ENCODE measurements at regions of chr17 and their contacts with region 1.

Region 1: GRCh38 chr17:28750178-28751047 is 6.6 kb downstream of the TRAF4 start:
- DNase-seq: peak; percentile 91 to 98 (median 97)
- H3K4me3 ChIP-seq: no peak overlapping the region
- H3K27ac ChIP-seq: peak overlapping the region in 3 of 5 donors; percentile 51 to 98 (median 58)
- H3K4me1 ChIP-seq: peaks cover 24 to 36% of the 10 kb centered on the region in 2 donors
- H3K27me3 ChIP-seq: no peaks in the 10 kb centered on the region
- CTCF ChIP-seq: peak; percentile 99 to 100 (median 100)
- POLR2A ChIP-seq: peak in 1 of 2 donors; percentile 22

Region 2: DNA sequence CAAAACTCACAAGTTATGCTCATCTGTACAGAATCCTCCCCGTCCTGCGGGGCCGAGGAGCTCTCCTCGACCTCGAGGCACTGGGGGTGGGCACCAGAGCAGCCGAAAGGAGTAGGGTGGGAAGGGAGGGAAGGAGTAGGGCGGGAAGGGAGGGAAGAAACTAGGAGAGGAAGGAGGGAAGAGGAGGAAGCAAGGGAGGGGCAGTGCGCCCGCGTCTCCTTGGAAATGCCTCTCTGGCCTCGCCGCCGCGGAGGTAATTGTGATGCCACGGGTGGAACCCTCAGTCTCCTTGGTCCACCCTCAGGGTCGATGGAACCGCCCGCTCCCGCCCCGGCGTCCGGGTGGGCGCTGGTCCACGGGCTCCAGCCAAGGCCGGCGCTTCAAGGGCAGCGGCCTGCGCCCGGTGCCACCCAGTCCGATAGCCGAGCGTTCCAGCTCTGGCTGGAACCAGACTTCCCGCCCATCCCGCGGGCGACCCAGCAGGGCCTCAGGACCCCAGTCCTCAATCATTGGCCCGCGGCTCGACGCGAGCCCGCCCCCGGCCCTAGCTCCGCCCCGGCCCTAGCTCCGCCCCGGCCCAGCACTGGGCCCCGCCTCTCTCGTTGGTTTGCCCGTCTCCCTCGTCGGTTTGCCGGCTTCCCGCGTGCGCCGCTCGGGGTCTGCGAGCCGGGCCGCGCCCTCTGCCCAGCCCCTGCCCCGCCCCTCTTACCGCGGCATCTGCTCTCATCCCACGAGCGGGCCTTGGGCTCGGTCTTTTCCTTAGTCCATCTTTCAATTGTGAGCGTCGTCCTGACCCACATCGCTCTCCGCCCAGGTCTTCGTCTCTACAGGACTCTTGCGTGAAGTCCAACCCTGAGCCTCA is 39.3 kb before region 1 on chr17:
- intact Hi-C with region 1: no loop called
- DNase-seq: peak; percentile 85 to 93 (median 90)
- H3K4me3 ChIP-seq: peak overlapping the region in 2 of 4 donors; percentile 18 to 61
- H3K27ac ChIP-seq: peak overlapping the region; percentile 73 to 94 (median 78)
- H3K4me1 ChIP-seq: peaks cover 8 to 14% of the 10 kb centered on the region in 2 donors
- H3K27me3 ChIP-seq: no peaks in the 10 kb centered on the region
- CTCF ChIP-seq: peak in 1 of 6 experiments; percentile 2
- POLR2A ChIP-seq: peak; percentile 57 to 64

Region 3: DNA sequence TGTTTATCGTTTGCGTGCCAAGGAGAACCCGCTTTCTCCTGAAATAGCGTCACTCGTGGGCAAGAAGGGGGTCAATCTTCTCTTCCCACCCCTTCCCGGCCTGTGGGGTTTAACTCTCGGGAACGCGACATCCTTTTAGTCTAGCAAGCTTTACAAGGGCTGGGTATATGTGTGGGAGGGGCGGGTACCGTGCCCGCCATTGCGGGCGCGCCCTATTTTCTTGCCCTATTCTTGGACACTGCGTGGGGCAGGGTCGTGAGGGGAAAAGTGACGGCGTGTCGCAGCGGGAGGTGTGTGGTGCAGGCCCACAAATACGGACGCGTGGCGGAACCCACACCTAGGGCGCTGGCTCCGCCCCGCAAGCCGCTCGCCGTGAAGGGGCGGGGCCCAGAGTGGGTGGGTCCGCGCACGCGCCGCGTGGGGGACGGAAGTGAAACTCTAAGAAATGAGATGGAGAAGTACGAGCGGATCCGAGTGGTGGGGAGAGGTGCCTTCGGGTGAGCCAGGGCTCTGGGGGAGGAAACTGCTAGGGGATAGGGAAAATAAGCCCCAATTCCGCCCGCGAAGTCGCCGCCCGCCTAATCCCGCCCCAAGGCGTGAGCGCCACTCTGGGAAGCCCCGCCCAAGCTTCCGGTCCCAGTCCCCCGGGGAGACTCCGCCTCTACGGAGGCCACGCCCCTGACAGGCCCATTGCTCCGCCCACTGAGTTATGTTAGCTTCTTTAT is 21.9 kb before region 1 on chr17 and contains the start of gene NEK8:
- intact Hi-C with region 1: loop called in 1 of 2 experiments (anchors 2 kb)
- DNase-seq: peak; percentile 93 to 98 (median 95)
- H3K4me3 ChIP-seq: peak within 1 kb of the TSS; percentile 28 to 73 (median 64)
- H3K27ac ChIP-seq: peak within 1 kb of the TSS; percentile 67 to 97 (median 83)
- H3K4me1 ChIP-seq: peaks cover 15 to 28% of the 10 kb centered on the region in 2 donors
- H3K27me3 ChIP-seq: no peaks in the 10 kb centered on the region
- CTCF ChIP-seq: no peak
- POLR2A ChIP-seq: peak; percentile 14 to 21
- total RNA-seq, gene NEK8: 0.54 to 11.9 (median 6.1) TPM

Region 4: GRCh38 chr17:28842282-28843012 is 92.0 kb after region 1 on chr17 and contains the start of gene FAM222B:
- intact Hi-C with region 1: loop called in 1 of 2 experiments (anchors 10 kb)
- DNase-seq: peak; percentile 75 to 83 (median 80)
- H3K4me3 ChIP-seq: peak within 1 kb of the TSS; percentile 21 to 89 (median 56)
- H3K27ac ChIP-seq: peak within 1 kb of the TSS in 3 of 5 donors; percentile 21 to 86 (median 69)
- H3K4me1 ChIP-seq: peaks cover 5 to 10% of the 10 kb centered on the region in 2 donors
- H3K27me3 ChIP-seq: no peaks in the 10 kb centered on the region
- CTCF ChIP-seq: peak in 1 of 6 experiments; percentile 7
- POLR2A ChIP-seq: peak; percentile 52 to 77
- total RNA-seq, gene FAM222B: 5.0 to 18.3 (median 14.8) TPM

Region 5: GRCh38 chr17:28856028-28856574 is 105.7 kb after region 1 on chr17:
- intact Hi-C with region 1: no loop called
- DNase-seq: no peak
- H3K4me3 ChIP-seq: no peak overlapping the region
- H3K27ac ChIP-seq: no peak overlapping the region
- H3K4me1 ChIP-seq: peaks cover 6 to 9% of the 10 kb centered on the region in 2 donors
- H3K27me3 ChIP-seq: no peaks in the 10 kb centered on the region
- CTCF ChIP-seq: no peak
- POLR2A ChIP-seq: no peak

Region 6: DNA sequence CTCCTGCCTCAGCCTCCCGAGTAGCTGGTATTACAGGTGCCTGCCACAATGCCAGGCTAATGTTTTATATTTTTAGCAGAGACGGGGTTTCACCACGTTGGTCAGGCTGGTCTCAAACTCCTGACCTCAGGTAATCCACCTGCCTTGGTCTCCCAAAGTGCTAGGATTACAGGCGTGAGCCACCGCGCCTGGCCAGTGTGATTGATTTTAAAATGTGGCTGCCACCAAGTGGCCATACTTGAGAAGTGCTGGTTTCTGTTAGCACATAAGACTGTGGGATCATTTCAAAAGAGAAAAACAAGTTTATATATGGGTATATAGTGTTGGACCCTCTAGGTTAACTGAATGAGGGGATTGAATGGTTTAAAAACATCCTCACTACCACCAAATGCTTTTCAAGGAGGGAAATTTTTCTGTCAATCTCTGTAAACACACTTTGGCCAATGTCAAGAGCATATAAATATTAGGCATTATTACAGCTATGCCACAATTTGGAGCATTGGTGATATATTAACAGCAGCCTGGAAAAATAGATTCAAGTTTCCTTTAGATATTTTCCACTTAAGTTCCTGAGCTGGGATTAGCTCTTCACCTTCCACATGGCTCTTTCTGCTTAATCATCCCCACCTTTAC is 166.0 kb after region 1 on chr17:
- intact Hi-C with region 1: loop called in 1 of 2 experiments (anchors 10 kb)
- DNase-seq: peak in 6 of 7 donors; percentile 44 to 80 (median 60)
- H3K4me3 ChIP-seq: no peak overlapping the region
- H3K27ac ChIP-seq: no peak overlapping the region
- H3K4me1 ChIP-seq: peaks cover 0 to 16% of the 10 kb centered on the region in 2 donors
- H3K27me3 ChIP-seq: no peaks in the 10 kb centered on the region
- CTCF ChIP-seq: peak; percentile 46 to 75 (median 67)
- POLR2A ChIP-seq: no peak

Region 7: DNA sequence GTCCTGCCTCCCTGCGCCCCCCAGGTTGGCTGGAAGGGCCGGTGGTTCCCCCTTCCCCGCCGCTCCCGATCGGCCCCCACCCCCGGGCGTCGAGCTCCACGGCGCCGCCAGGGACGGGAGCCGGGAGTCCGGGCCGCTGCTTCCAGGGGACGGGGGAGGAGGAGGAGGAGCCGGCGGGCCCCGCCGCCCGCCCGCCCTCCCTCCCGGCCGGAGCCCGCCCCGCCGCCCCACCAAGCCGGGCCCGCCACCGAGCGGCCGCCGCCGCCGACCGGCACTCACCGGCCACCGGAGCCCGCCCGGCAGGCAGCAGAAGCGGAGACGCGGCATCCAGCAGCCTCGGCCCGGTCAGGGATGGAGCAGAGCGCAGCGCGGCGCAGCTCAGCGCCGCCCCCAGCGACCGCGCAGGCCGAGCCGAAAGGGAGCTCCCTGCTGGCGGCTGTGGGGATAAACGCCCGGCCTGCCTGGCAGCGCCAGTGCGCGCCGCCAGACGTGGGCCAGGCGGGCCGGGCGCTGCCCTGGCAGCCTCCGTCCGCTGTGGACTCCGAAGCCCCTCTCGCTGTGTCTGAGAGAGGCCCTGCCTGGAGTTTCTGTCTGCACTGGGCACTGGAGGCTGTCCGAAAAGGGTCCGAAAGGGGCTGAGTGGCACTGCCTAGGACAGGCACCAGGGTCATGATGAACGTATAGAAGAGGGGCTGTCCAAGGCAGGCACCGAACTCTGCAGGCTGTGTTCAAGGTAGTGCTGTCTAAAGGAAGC is 429.8 kb after region 1 on chr17 and contains the start of gene MYO18A:
- intact Hi-C with region 1: no loop called
- DNase-seq: peak; percentile 71 to 83 (median 82)
- H3K4me3 ChIP-seq: peak within 1 kb of the TSS in 2 of 4 donors; percentile 47 to 72
- H3K27ac ChIP-seq: peak within 1 kb of the TSS in 3 of 5 donors; percentile 57 to 92 (median 81)
- H3K4me1 ChIP-seq: peaks cover 10 to 41% of the 10 kb centered on the region in 2 donors
- H3K27me3 ChIP-seq: no peaks in the 10 kb centered on the region
- CTCF ChIP-seq: peak; percentile 29 to 97 (median 76)
- POLR2A ChIP-seq: peak; percentile 23 to 43
- total RNA-seq, gene MYO18A: 19.6 to 59.0 (median 39.1) TPM

Measured in adrenal gland (tissue), 19 donors.